ENCODE measurements at regions of chr20 and their contacts with region 1.

Region 1: DNA sequence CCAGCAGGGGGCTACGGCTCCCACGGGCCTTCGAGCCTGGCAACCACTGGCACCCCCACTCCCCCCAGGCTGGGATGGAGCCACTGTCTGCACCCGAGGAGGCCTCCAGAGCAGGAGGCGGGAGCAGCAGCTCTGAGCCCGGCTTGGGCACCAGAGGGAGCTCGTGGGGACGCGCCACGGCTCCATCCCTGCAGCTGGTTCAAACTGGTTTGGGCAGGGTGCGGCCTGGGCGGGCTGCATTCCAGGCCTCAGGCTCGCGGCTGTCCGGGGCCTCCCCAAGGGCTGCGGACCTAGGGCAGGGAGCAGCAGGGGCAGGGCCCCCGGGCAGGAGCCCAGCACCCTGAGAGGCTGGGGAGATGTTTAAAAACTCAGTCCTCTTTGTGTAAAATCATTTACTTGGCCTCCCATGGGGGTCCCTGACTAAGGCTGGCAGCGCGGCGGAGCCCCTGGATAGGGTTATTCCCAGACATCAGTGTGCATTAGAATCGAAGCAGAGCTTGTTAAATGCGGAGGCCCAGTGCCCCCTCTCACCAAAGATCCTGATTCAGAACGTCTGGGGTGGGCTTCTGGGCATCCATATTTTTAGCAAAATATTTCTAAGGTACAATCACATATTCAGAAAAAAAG is 4.1 kb upstream of the BCAS4 start:
- DNase-seq: peak; percentile 92
- ATAC-seq: peak; percentile 76
- H3K4me3 Mint-ChIP-seq: no peak overlapping the region
- H3K27ac Mint-ChIP-seq: 0 out of 2 replicates have a peak overlapping the region, but pooled peaks have one; percentile 53
- H3K4me1 Mint-ChIP-seq: peaks cover 26% of the 10 kb centered on the region
- H3K27me3 Mint-ChIP-seq: peaks cover 4% of the 10 kb centered on the region
- CTCF ChIP-seq: peak; percentile 35; the same call in 1 of the 2 replicates

Region 2: DNA sequence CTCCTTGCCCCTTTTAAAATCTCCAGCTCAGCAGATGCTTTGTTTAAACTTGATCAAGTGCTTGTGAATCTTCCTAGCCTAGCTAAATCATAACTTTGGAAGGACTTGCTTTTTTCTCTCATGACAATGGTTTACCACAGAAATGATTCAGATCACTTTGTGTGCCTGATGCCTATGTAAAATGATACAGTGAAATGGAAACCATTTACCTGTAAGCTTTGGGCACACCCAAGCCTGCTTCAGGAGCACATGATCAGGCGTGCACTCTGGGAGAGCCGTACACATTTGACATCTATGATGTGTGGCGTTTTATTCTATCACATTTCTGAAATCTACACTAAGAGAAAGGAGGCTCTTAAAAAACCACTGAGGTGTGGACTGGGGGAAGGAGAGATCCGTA is 239.5 kb before region 1 on chr20:
- CTCF ChIA-PET with region 1: no interaction called
- POLR2A ChIA-PET with region 1: no interaction called
- DNase-seq: no peak
- ATAC-seq: no peak
- H3K4me3 Mint-ChIP-seq: no peak overlapping the region
- H3K27ac Mint-ChIP-seq: peak overlapping the region; percentile 34; the same call in 1 of the 2 replicates
- H3K4me1 Mint-ChIP-seq: 0 out of 2 replicates have a peak, but pooled peaks cover 5% of the 10 kb centered on the region
- H3K27me3 Mint-ChIP-seq: no peaks in the 10 kb centered on the region
- CTCF ChIP-seq: no peak

Region 3: GRCh38 chr20:50663095-50663850 is 127.5 kb before region 1 on chr20:
- CTCF ChIA-PET with region 1: interaction called, 22 read pairs
- POLR2A ChIA-PET with region 1: no interaction called
- DNase-seq: no peak
- ATAC-seq: peak; percentile 68
- H3K4me3 Mint-ChIP-seq: no peak overlapping the region
- H3K27ac Mint-ChIP-seq: peak overlapping the region; percentile 38; the same call in 1 of the 2 replicates
- H3K4me1 Mint-ChIP-seq: peaks cover 34% of the 10 kb centered on the region
- H3K27me3 Mint-ChIP-seq: no peaks in the 10 kb centered on the region
- CTCF ChIP-seq: no peak

Region 4: DNA sequence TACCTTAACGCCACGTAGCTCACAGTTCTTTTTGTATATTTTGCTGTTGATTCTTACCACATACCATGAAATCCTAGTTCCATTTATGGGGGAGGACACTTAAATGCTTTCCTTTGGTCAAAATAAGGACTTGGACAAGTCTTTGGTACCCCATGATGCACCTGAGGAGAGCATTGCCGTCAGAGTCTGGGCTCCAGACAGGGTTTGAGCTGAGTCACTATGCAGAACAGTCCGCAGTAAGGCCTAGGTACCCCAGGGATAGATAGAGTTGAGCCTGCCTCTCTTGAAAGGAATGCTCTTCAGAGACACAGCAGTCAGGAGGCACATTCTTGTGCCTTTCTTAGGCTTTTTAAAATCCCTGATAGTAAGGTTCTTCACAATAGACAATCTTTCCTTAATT is 53.4 kb before region 1 on chr20:
- CTCF ChIA-PET with region 1: interaction called, 7 read pairs
- POLR2A ChIA-PET with region 1: interaction called, 10 read pairs
- DNase-seq: peak; percentile 22
- ATAC-seq: peak; percentile 93
- H3K4me3 Mint-ChIP-seq: no peak overlapping the region
- H3K27ac Mint-ChIP-seq: peak overlapping the region; percentile 94
- H3K4me1 Mint-ChIP-seq: peaks cover 62% of the 10 kb centered on the region
- H3K27me3 Mint-ChIP-seq: no peaks in the 10 kb centered on the region
- CTCF ChIP-seq: no peak

Region 5: DNA sequence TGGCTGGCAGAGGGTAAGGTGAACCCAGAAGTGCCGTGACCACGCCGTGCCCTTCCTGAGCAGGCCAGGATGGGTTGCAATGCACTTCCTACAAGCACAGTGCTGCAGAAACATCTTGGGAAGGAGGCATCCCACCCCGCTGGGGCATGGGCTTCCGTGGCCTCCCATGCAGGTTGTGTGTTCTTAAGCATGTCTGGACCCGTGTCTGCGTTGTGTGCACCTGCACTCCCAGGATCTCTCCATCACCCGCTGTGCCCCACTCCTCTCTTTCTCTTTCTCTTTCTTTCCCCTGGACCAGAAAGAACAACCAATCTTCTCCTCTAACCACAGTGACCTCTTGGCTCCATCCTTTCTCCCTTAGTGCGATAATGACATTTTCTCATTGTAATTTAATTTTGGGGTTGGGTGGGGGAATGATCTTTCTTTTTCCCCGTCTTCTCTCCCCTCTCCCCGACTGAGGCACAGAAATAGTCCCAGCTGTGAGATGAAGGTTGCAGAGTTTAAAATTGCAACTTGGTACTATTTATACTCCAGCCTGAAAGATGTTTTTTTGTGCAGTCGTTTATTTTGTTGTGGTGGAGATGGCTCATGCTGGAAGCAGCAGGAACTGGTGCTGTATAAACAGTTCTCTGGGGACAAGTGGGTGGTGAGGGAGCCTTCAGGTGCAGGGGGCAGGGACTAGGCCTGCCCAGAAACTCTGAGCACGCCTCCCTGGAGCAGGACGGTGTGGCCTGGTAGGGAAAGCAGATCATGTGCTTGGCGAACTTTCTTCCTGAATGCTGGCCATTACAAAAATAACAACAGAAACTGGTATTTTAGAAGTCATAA is 24.6 kb after region 1 on chr20:
- CTCF ChIA-PET with region 1: interaction called, 28 read pairs
- POLR2A ChIA-PET with region 1: no interaction called
- DNase-seq: no peak
- ATAC-seq: 0 out of 2 replicates have a peak, but pooled peaks have one; percentile 10
- H3K4me3 Mint-ChIP-seq: no peak overlapping the region
- H3K27ac Mint-ChIP-seq: peak overlapping the region; percentile 67
- H3K4me1 Mint-ChIP-seq: peaks cover 22% of the 10 kb centered on the region
- H3K27me3 Mint-ChIP-seq: no peaks in the 10 kb centered on the region; the same call in 1 of the 2 replicates
- CTCF ChIP-seq: no peak

Region 6: DNA sequence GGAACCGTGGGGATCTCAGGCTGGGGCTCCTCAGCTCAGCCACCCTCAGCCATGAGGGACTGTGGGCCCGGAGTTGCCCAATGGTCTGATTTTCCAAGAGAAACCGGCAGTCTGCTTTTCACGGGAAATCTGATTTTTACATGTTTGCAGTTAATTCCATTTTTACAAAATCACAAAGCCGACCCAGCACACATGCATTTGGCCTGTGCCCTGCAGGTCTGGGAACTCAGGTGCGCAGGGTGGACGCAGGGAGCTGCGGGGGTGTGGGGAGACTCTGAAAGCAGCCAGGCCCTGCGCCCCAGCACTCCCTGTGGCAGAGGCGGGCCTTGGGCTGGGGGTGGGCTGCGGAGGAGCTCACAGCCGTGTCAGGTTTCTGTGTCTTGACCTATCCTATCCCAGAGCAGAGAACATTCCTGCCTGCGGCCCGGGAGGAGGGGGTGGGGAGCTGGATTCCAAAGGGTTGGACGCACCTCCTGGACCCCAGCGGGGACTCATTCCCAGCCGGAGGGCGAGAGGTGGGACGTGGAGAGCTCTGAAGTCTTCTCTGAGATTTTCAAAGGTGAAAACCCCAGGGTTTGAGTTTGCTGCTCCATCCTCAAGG is 79.9 kb after region 1 on chr20:
- CTCF ChIA-PET with region 1: interaction called, 49 read pairs
- POLR2A ChIA-PET with region 1: interaction called, 11 read pairs
- DNase-seq: peak; percentile 94
- ATAC-seq: peak; percentile 99
- H3K4me3 Mint-ChIP-seq: peak overlapping the region; percentile 75
- H3K27ac Mint-ChIP-seq: peak overlapping the region; percentile 97
- H3K4me1 Mint-ChIP-seq: peaks cover 36% of the 10 kb centered on the region
- H3K27me3 Mint-ChIP-seq: no peaks in the 10 kb centered on the region
- CTCF ChIP-seq: no peak

Region 7: DNA sequence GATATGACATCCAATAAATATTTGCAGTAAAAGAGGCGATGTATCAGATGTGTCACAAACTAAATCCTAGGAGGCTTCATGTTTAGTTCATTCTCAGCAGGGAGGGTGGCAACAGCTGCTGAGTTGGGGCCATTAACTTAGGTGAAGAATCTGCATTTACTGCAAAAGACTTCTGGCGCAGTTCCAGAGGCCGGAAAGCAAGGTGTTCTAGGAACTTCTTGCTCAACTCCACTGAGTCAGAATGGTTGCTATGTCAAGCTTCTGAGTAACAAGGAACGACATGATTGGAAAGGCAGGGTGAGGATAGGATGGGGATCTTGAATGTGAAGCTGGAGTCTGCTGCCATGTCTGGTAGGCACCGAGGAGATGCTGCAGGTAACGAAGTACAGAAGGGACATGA is 128.8 kb after region 1 on chr20:
- CTCF ChIA-PET with region 1: interaction called, 55 read pairs
- POLR2A ChIA-PET with region 1: interaction called, 5 read pairs
- DNase-seq: no peak
- ATAC-seq: no peak; the same call in 1 of the 2 replicates
- H3K4me3 Mint-ChIP-seq: no peak overlapping the region
- H3K27ac Mint-ChIP-seq: peak overlapping the region; percentile 28
- H3K4me1 Mint-ChIP-seq: peaks cover 80% of the 10 kb centered on the region
- H3K27me3 Mint-ChIP-seq: no peaks in the 10 kb centered on the region
- CTCF ChIP-seq: no peak

Region 8: DNA sequence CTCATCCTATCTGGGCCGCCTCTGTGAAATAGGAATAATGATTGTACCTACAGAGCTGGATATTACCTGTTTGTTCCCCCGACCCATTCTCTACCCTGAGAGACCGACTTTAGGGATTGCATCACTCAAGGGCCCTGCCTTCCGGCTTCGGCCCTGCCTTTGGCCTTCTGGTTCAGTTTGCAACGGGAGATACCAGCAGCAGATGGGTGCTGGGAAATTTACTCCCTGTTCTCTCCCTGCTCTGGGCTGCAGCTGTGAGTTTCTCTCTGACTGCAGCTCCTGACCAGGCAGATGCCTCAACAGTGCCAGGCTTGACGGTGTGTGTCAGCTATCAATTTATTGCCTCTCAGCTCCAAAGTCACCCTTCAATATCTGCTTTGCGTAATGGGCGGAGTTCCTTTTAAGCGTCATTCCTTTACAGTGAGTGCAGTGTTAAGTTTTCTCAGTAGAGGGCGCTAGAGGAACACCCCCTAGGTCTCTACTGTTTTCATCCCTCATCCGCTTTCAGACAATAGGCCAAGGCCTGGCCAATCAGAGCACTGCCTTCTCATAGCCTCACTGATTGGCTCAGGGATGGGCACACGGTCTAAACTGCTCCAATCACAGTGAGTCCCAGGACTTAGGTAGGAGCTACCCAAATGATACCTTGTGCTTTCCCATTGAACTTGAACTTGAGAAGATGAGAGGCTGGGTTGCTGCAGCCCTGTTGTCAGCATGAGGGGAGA is 202.1 kb after region 1 on chr20:
- CTCF ChIA-PET with region 1: interaction called, 20 read pairs
- POLR2A ChIA-PET with region 1: no interaction called
- DNase-seq: peak; percentile 74
- ATAC-seq: peak; percentile 91
- H3K4me3 Mint-ChIP-seq: peak overlapping the region; percentile 52
- H3K27ac Mint-ChIP-seq: peak overlapping the region; percentile 98
- H3K4me1 Mint-ChIP-seq: peaks cover 40% of the 10 kb centered on the region
- H3K27me3 Mint-ChIP-seq: peaks cover 5% of the 10 kb centered on the region
- CTCF ChIP-seq: peak; percentile 89

Region 9: DNA sequence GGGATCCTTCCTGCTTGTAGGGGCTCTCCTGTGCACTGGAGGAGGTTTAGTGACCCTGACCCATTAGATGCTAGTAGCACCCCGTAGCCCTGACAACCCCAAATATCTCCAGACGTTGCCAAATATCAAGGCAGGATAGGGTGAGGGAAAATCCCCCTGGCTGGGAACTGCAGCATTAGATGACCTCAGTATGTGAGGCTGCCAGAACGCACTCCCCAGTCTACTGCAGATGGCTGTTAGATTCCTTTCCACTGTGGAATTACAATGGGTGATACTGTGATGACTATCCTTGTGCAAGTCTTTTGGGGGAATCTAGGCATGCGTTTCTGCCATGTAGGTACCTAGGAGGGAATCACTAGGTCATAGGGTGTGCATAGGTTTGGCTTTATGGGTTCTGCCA is 458.5 kb after region 1 on chr20:
- CTCF ChIA-PET with region 1: no interaction called
- POLR2A ChIA-PET with region 1: no interaction called
- DNase-seq: no peak
- ATAC-seq: no peak; the same call in 1 of the 2 replicates
- H3K4me3 Mint-ChIP-seq: no peak overlapping the region
- H3K27ac Mint-ChIP-seq: no peak overlapping the region
- H3K4me1 Mint-ChIP-seq: peaks cover 7% of the 10 kb centered on the region; the same call in 1 of the 2 replicates
- H3K27me3 Mint-ChIP-seq: peaks cover 12% of the 10 kb centered on the region
- CTCF ChIP-seq: no peak

Measured in WTC11 (cell line).